Uterus (tissue), 4 donors: ENCODE measurements at regions of chr11 and their contacts with region 1.

Region 1: DNA sequence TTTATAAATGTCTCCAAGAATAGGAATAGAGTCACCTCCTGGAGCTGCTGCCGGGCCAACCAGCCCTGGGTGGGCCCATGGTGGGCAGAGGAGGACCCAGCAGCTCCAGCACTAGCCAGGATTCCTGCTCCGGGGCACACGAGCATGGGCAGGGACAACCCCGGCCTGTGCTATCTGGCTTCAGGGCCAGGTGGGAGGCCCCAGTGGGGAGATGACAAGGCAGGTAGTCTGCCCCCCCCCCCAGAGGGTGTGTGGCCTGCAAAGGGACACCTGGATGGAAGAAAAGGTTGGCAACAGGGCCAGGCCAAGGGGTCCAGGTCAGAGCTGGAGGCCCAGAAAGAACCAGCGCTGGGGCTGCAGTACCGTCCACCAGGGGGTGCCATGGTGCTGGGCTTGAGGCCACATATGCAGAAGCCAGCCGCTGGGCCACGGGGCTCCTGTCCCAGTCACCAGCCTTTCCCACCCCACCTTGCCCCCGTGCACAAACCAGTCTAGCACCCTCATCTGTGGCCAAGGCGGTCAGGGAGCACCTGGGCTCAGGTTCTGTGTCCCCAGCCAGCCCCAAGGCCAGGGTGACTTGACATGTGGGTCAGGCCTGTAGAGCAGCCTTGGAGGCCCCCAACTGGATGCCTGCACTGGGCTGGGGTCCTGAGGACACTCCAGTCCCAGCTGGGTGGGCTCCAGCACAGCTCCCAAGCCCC is 3.5 kb downstream of the TSPAN32 start:
- DNase-seq: peak; percentile 86 to 90
- H3K4me3 ChIP-seq: no peak overlapping the region
- H3K27ac ChIP-seq: peak overlapping the region; percentile 89 to 99
- H3K4me1 ChIP-seq: peaks cover 22 to 28% of the 10 kb centered on the region in 2 donors
- H3K27me3 ChIP-seq: no peaks in the 10 kb centered on the region
- CTCF ChIP-seq: peak; percentile 90 to 96 (median 94)
- POLR2A ChIP-seq: peak in 1 of 2 donors; percentile 26

Region 2: GRCh38 chr11:2196970-2197770 is 108.1 kb before region 1 on chr11:
- intact Hi-C with region 1: loop called (anchors 10 kb)
- DNase-seq: peak; percentile 76 to 83
- H3K4me3 ChIP-seq: no peak overlapping the region
- H3K27ac ChIP-seq: no peak overlapping the region
- H3K4me1 ChIP-seq: no peaks in the 10 kb centered on the region
- H3K27me3 ChIP-seq: no peaks in the 10 kb centered on the region
- CTCF ChIP-seq: peak; percentile 87 to 98 (median 94)
- POLR2A ChIP-seq: no peak

Region 3: GRCh38 chr11:2400069-2400760 is 94.9 kb after region 1 on chr11 and contains the start of gene TSSC4:
- intact Hi-C with region 1: loop called (anchors 5 kb)
- DNase-seq: peak; percentile 100
- H3K4me3 ChIP-seq: peak within 1 kb of the TSS; percentile 85 to 99
- H3K27ac ChIP-seq: peak within 1 kb of the TSS; percentile 96 to 97
- H3K4me1 ChIP-seq: peaks cover 7 to 16% of the 10 kb centered on the region in 2 donors
- H3K27me3 ChIP-seq: no peaks in the 10 kb centered on the region
- CTCF ChIP-seq: peak; percentile 91 to 100 (median 98)
- POLR2A ChIP-seq: peak; percentile 84 to 92
- total RNA-seq, gene TSSC4: 11.0 to 66.5 (median 26.2) TPM

Region 4: GRCh38 chr11:2420502-2421225 is 115.4 kb after region 1 on chr11:
- intact Hi-C with region 1: loop called (anchors 5 kb)
- DNase-seq: peak; percentile 72 to 77
- H3K4me3 ChIP-seq: no peak overlapping the region
- H3K27ac ChIP-seq: peak overlapping the region; percentile 61 to 67
- H3K4me1 ChIP-seq: no peaks in the 10 kb centered on the region
- H3K27me3 ChIP-seq: no peaks in the 10 kb centered on the region
- CTCF ChIP-seq: peak; percentile 90 to 98 (median 96)
- POLR2A ChIP-seq: peak in 1 of 2 donors; percentile 32

Region 5: GRCh38 chr11:2522671-2523141 is 217.4 kb after region 1 on chr11:
- intact Hi-C with region 1: no loop called
- DNase-seq: peak; percentile 7 to 8
- H3K4me3 ChIP-seq: no peak overlapping the region
- H3K27ac ChIP-seq: no peak overlapping the region
- H3K4me1 ChIP-seq: no peaks in the 10 kb centered on the region
- H3K27me3 ChIP-seq: no peaks in the 10 kb centered on the region
- CTCF ChIP-seq: no peak
- POLR2A ChIP-seq: no peak